Spleen (tissue), 13 donors: ENCODE measurements at regions of chr18 and their contacts with region 1.

Region 1: DNA sequence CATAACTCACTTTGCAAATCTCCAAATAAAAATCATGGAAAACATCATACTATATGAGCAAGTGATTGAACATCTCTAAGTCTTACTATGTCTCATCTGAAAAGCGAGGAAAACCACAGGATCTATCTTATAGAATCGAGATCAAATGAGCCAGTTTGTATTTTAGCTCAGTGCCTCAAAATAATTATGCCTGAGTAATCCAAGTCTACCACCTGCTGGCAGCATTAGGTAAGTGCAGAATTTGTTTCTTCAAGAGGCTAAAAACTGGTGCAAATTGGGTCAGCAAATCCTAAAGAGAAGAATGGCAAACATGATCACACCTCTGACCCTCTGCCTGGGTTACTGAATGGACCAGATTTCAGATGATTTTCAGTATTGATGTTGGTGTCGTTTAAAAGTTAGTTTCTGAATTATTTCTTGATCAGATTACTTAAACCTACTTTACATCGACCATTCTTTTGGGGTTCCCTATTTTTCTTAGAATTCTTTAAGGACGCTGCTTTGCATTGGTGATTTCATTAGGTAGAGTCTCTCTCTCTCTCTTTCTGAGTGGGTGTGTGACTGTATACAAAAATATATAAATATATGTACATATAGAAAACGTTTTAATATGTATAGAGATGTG is 12.7 kb upstream of the FHOD3 start:
- DNase-seq: no peak
- H3K4me3 ChIP-seq: no peak overlapping the region
- H3K27ac ChIP-seq: no peak overlapping the region
- H3K4me1 ChIP-seq: no peaks in the 10 kb centered on the region
- H3K27me3 ChIP-seq: peaks cover 0 to 47% (median 0%) of the 10 kb centered on the region in 7 donors
- CTCF ChIP-seq: peak; percentile 64 to 88 (median 82)
- POLR2A ChIP-seq: no peak

Region 2: DNA sequence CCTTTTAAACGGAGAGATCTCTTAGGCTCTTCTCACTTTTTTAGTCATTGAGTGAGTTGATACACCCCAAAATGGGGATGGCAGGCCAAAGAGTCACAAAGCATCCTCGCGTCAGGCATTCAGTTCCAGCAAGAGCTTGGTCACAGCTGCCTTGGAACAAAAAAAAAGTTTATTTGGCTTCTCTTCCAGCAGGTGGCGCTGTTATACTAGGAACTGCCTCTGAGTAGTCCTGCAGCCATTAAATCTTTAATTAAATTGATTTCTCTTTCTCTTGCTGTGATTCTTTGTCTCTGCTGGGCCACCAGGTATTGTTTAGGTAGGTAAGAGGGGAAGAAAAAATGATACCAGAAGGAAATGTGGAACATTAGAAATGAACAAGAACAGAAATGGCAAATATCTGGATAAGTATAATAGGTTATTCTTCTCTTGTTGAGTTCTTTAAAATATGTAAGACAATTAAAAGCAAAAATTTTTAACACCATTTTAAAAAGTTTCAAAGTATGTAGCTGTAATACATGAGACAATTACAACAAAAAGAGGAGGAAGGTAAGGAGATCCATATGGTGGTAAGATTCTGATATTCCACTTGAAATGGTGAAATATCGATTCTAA is 528.2 kb before region 1 on chr18:
- intact Hi-C with region 1: loop called (anchors 10 kb)
- DNase-seq: no peak
- H3K4me3 ChIP-seq: no peak overlapping the region
- H3K27ac ChIP-seq: no peak overlapping the region
- H3K4me1 ChIP-seq: peaks cover 0 to 7% (median 0%) of the 10 kb centered on the region in 6 donors
- H3K27me3 ChIP-seq: peaks cover 0 to 17% (median 0%) of the 10 kb centered on the region in 7 donors
- CTCF ChIP-seq: peak in 10 of 11 experiments; percentile 55 to 82 (median 74)
- POLR2A ChIP-seq: no peak

Region 3: DNA sequence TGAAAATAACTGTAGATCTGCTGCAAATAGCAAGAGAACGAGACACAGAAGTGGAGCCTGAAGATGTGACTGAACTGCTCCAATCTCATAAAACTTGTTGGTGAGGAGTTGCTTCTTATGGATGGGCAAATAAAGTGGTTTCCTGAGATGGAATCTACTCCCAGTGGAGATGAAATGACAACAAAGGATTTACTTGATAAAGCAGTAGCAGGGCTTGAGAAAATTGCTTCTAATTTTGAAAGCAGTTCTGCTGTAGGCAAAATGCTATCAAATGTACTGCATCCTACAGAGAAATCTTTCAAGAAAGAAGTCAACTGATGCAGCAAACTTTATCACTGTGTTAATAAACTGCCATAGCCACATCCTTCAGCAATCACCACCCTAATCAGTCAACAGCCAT is 261.4 kb before region 1 on chr18:
- intact Hi-C with region 1: loop called (anchors 5 kb)
- DNase-seq: no peak
- H3K4me3 ChIP-seq: no peak overlapping the region
- H3K27ac ChIP-seq: no peak overlapping the region
- H3K4me1 ChIP-seq: peaks cover 0 to 17% (median 0%) of the 10 kb centered on the region in 6 donors
- H3K27me3 ChIP-seq: no peaks in the 10 kb centered on the region
- CTCF ChIP-seq: no peak
- POLR2A ChIP-seq: no peak

Region 4: DNA sequence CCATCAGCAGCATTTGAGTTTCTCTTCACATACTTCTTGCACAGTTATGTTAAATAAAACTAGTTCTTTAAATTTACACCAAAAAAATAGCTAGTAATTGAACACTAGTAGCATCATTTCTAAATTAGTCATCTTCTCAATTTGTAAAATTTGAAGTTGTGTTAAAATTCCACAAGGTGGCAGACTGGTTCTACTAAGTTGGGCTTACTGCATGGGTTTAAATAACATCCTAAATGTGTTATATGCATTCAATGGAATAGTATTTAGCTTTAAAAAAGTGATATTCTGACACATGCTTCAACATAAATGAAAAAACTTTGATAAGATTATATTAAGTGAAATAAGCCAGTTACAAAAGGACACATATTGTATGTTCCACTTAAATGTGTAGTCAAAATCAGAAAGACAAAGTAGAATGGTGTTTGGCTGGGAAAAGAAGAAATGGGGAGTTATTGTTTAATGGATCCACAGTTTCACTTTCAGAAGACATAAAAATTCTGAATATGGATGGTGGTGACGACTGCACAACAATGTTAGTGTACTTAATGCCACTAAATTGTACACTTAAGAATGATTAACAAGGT is 188.8 kb before region 1 on chr18:
- intact Hi-C with region 1: loop called (anchors 5 kb)
- DNase-seq: no peak
- H3K4me3 ChIP-seq: no peak overlapping the region
- H3K27ac ChIP-seq: no peak overlapping the region
- H3K4me1 ChIP-seq: no peaks in the 10 kb centered on the region
- H3K27me3 ChIP-seq: no peaks in the 10 kb centered on the region
- CTCF ChIP-seq: peak; percentile 7 to 56 (median 47)
- POLR2A ChIP-seq: no peak